Posterior vena cava (tissue), 2 donors: ENCODE measurements at regions of chr19 and their contacts with region 1.

Region 1: DNA sequence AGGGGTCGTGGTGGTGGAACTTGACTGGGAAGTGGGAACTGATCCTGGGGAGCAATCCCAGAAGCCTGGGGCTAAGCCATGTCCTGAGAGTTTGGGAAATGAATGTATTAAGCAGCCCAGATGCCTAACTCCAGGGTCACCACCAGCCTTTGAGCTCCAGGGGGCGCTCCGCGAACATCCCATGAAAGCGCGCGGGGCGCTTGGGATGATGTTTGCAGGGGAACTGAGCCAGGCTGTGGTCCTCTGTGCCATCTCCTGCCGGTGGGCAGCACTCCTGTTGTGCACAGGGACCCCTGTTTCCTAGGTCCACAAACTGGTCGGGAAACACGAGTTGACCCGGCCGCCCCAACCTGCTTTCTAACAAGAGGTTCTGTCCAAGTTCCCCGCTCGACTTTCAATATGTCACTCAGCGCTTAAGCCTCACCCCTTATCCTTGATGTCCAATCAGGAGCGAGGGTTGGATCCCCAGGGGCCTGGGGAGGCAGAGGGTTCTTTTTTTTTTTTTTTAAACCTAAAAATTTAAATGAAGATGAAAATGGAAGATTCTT is 14.4 kb downstream of the LEUTX start:
- DNase-seq: peak; percentile 93

Region 2: GRCh38 chr19:39846176-39846677 is 53.2 kb after region 1 on chr19 and contains the start of gene FBL:
- intact Hi-C with region 1: loop called in 1 of 2 experiments (anchors 5 kb)
- DNase-seq: peak; percentile 99
- total RNA-seq, gene FBL: 94.1 to 121 TPM

Region 3: GRCh38 chr19:39870171-39870590 is 77.1 kb after region 1 on chr19:
- intact Hi-C with region 1: no loop called
- DNase-seq: no peak